ENCODE measurements at regions of chr14 and their contacts with region 1.

Region 1: DNA sequence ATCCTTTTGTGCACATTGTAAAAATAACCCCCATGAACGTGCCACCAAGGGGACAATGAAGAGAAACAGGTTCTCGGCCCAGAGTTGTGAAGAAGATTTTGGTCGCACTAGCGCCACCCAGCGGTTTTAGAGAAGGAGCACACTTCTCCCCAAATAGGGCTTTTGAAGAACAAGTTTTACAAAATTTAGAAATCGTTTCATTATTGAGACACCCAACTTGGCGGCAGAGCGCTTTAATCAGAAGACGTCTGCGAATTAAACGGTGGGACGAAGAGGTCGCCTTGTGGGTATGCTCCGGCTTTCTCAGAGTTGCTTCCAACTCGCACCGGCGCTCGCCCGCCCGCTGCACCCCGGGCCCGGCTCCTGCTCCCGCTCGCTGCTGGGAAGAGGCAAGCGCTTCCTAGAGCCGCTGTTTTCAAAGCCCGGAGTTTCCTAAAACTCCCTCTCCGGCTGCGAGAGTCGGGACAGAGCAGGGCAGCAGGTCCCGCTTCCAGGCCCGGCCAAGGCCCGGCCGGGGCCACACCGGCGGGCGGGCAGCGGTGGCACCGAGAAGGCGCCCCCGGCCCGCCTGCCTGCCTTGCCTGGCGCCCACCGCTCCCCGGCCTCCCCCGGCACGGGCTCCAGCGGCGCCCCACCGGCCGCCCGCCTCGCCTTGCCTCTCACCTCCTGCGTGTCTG is 673 bp downstream of the FOXA1 start:
- DNase-seq: peak; percentile 94
- H3K4me3 Mint-ChIP-seq: peak overlapping the region; percentile 84
- H3K27ac Mint-ChIP-seq: peak overlapping the region; percentile 43
- H3K4me1 Mint-ChIP-seq: peaks cover 7% of the 10 kb centered on the region
- H3K27me3 Mint-ChIP-seq: no peaks in the 10 kb centered on the region
- CTCF ChIP-seq: peak; percentile 82

Region 2: DNA sequence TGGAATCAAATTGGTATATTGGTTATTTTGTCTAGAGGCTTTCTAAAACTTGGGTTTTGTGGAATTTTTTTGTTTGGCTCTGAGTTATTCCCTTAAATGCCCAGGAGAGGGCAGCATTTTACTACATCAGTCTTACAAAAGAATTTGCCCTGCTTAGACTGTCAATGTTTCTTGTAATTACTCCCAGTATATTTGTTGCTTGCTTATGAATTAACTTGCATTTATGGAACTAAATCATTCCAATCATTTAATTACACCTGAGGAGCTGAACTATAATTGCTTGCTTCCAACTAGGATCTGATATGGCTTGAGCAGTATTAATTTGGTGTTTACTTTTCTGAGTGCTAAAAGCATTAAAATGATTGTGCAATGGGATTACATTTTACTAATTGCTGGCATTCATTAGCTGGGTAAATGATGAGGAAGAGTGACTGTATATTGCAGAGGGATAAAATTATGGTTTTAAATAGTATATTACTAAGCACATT is 347.9 kb before region 1 on chr14:
- CTCF ChIA-PET with region 1: interaction called, 46 read pairs
- POLR2A ChIA-PET with region 1: interaction called, 3 read pairs
- intact Hi-C with region 1: loop called (anchors 1 kb)
- DNase-seq: peak; percentile 64
- H3K4me3 Mint-ChIP-seq: no peak overlapping the region
- H3K27ac Mint-ChIP-seq: no peak overlapping the region
- H3K4me1 Mint-ChIP-seq: no peaks in the 10 kb centered on the region
- H3K27me3 Mint-ChIP-seq: no peaks in the 10 kb centered on the region
- CTCF ChIP-seq: peak; percentile 63

Region 3: DNA sequence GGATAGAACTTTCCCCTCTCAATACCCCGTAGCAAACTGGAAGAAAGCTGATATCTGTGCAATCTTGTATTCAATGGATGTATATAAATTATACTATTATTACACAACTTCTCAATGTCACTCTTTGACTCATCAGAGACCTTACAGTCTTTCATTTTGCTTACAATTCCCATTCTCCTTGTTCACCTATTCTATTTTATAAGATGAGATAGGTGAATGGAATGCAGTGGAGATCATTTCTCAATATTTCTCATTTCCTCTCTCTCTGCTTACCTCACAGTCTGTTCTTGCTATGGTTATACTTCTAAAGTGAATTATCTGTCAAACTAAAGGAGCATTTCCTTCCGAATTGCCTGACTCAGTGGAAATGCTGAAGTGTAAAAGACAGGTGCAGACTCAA is 14.2 kb before region 1 on chr14:
- CTCF ChIA-PET with region 1: interaction called, 9 read pairs
- POLR2A ChIA-PET with region 1: no interaction called
- intact Hi-C with region 1: loop called (anchors 2 kb)
- DNase-seq: peak; percentile 76
- H3K4me3 Mint-ChIP-seq: no peak overlapping the region
- H3K27ac Mint-ChIP-seq: peak overlapping the region; percentile 87
- H3K4me1 Mint-ChIP-seq: peaks cover 15% of the 10 kb centered on the region
- H3K27me3 Mint-ChIP-seq: no peaks in the 10 kb centered on the region
- CTCF ChIP-seq: no peak

Region 4: DNA sequence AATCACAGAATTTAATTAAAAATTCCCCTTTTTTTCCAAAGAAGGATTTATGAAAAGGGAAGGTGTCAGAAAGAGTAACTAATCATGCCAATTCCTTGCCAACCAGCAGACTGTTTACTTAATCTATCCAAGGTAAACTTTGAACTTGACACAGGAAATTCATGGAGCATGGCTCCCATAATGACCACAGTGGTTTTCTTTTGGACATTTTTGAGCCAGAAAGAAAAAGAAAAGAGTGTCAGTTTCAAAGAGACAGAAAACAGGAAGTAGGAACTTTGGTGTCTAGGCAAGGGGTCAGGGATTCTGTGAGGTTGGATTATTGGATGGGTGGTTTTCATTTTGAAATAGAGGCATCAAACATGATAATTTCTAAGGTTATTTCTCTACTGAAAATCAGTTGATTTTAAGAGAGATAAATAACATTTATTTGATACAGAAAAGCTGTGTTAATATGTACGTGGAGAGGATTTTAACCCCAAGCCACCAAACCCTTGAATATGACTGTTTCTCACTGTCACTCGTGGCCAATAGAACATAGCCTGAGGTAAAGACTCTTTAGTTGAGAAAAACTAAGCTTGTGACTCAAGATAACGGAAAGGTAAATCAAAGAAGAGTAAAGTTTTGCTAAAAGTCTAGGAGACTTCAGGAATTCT is 197.1 kb after region 1 on chr14:
- CTCF ChIA-PET with region 1: no interaction called
- POLR2A ChIA-PET with region 1: no interaction called
- intact Hi-C with region 1: no loop called
- DNase-seq: no peak
- H3K4me3 Mint-ChIP-seq: no peak overlapping the region
- H3K27ac Mint-ChIP-seq: no peak overlapping the region
- H3K4me1 Mint-ChIP-seq: no peaks in the 10 kb centered on the region
- H3K27me3 Mint-ChIP-seq: no peaks in the 10 kb centered on the region
- CTCF ChIP-seq: no peak

Region 5: GRCh38 chr14:37874429-37875191 is 280.2 kb after region 1 on chr14:
- CTCF ChIA-PET with region 1: interaction called, 12 read pairs
- POLR2A ChIA-PET with region 1: no interaction called
- intact Hi-C with region 1: loop called (anchors 2 kb)
- DNase-seq: peak; percentile 83
- H3K4me3 Mint-ChIP-seq: no peak overlapping the region
- H3K27ac Mint-ChIP-seq: no peak overlapping the region
- H3K4me1 Mint-ChIP-seq: peaks cover 22% of the 10 kb centered on the region
- H3K27me3 Mint-ChIP-seq: no peaks in the 10 kb centered on the region
- CTCF ChIP-seq: peak; percentile 77

Measured in MCF 10A (cell line).